A549 (cell line): ENCODE measurements at regions of chr5 and their contacts with region 1.

Region 1: DNA sequence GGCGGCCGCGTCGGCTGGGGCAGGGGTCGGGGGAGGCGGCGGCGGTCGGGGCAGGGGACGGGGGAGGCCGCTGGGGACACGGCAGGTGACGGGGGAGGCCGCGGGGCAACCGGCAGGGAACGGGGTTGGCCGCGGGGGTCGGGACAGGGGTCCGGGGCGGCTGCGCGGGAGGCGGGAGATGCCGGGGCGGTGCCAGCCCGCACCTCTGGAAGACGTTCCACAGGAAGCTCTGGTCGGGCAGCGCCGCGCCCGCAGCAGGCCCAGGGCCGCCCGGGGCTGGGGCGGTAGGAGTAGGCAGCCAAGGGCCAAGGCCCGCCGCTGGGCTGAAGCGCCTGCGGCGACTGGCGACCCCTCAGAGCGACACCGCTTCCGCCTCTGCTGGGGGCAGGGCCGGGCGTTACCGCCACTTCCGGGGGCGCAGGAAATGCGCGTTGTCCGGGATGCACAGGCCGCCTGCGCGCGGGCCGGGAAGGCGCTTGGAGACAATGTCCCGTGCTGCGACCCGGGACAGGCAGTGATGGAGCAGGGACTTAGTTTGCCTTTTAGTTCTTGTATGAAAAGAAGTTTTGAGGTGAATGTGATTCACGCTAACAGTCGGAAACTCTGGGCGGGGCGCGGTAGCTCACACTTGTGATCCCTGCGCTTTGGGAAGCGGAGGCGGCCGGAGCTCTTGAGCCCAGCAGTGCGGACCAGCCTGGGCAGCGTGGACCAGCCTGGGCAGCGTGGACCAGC is 110.0 kb upstream of the LPCAT1 start:
- DNase-seq: peak; percentile 49 to 82
- ATAC-seq: peak; percentile 89 to 96
- H3K4me3 ChIP-seq: peak overlapping the region; percentile 66
- H3K27ac ChIP-seq: peak overlapping the region; percentile 90 to 97
- H3K4me1 ChIP-seq: peaks cover 5% of the 10 kb centered on the region; the same call in 1 of the 3 replicates
- CTCF ChIP-seq: no peak
- EP300 ChIP-seq: no peak
- POLR2A ChIP-seq: peak; percentile 94
- RAD21 ChIP-seq: no peak

Region 2: DNA sequence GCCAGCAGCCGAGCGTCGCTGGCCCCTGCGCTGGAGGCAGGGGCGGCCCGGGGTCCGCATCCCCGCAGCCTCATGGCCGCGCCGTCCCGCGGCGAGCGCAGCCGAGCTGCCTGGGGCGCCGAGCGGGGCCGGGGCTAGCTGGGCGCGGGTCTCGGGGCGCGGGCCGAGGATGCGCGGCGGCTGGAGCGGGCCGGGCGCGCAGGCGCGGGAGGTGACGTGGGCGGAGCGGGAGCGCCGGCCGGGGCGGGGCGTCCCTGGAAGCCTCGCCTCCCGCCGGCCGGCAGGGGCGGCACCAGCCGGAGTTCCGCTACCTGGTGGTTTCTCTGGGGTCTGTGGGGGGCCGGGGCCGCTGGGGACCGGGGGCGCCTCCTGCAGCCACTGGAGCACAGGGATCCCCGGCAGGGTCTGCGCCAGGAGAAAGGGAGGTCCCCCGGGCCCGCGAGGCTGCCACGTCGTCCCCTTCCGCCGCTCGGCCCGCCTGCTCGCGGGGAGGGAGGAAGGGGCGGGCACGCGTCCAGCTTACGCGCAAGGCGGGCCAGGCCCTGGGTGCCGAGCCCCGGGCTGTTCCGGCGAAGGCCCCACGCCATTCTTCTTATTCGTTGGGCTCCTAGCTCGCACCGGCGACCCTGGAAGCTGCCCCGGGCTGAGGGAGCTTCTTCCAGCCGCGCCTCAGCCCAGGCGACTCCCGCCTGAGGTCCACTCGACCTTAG is 109.8 kb before region 1 on chr5 and contains the start of gene LPCAT1:
- CTCF ChIA-PET with region 1: no interaction called
- POLR2A ChIA-PET with region 1: interaction called, 10 read pairs
- DNase-seq: peak; percentile 62 to 70
- ATAC-seq: peak; percentile 75 to 89
- H3K4me3 ChIP-seq: peak within 1 kb of the TSS; percentile 93
- H3K27ac ChIP-seq: peak within 1 kb of the TSS; percentile 93 to 99
- H3K4me1 ChIP-seq: peaks cover 34% of the 10 kb centered on the region
- CTCF ChIP-seq: no peak
- EP300 ChIP-seq: no peak
- POLR2A ChIP-seq: peak; percentile 58
- RAD21 ChIP-seq: no peak; a peak in 1 of 5 replicates
- polyA plus RNA-seq, gene LPCAT1: 22.9 and 24.7 TPM in 2 replicates